Activated CD4-positive, alpha-beta T cell treated with anti-CD3 and anti-CD28 coated beads, Interleukin-2, amount 10 ng/mL, durations not matched to agents 24 days and 14 days (primary cell): ENCODE measurements at regions of chr9 and their contacts with region 1.

Region 1: GRCh38 chr9:89597711-89598625 is 6.8 kb upstream of the GADD45G start:
- DNase-seq: peak; percentile 90
- H3K4me3 Mint-ChIP-seq: no peak overlapping the region
- H3K27ac Mint-ChIP-seq: no peak overlapping the region
- H3K4me1 Mint-ChIP-seq: peaks cover 2% of the 10 kb centered on the region
- H3K27me3 Mint-ChIP-seq: peaks cover 34% of the 10 kb centered on the region

Region 2: DNA sequence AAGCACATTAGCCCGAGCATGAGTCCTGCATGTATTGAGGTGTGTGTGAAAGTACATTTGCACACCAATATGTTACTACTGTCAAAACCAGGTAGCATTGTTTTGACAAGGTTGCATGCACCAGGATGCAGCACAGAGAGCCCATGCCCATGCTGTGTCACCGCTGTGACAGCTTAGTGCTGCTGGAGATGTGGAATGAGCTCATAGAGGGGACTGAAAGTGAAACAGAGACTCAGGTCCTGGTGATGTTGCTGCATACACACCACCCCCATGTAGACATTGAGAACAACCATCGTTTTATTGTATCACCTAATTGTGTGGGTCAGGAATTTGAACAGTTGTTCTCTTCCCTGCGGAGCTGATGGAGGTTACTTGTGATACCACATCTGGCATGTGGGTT is 59.8 kb after region 1 on chr9:
- intact Hi-C with region 1: no loop called
- DNase-seq: peak; percentile 88
- H3K4me3 Mint-ChIP-seq: no peak overlapping the region
- H3K27ac Mint-ChIP-seq: no peak overlapping the region
- H3K4me1 Mint-ChIP-seq: peaks cover 48% of the 10 kb centered on the region
- H3K27me3 Mint-ChIP-seq: peaks cover 14% of the 10 kb centered on the region

Region 3: DNA sequence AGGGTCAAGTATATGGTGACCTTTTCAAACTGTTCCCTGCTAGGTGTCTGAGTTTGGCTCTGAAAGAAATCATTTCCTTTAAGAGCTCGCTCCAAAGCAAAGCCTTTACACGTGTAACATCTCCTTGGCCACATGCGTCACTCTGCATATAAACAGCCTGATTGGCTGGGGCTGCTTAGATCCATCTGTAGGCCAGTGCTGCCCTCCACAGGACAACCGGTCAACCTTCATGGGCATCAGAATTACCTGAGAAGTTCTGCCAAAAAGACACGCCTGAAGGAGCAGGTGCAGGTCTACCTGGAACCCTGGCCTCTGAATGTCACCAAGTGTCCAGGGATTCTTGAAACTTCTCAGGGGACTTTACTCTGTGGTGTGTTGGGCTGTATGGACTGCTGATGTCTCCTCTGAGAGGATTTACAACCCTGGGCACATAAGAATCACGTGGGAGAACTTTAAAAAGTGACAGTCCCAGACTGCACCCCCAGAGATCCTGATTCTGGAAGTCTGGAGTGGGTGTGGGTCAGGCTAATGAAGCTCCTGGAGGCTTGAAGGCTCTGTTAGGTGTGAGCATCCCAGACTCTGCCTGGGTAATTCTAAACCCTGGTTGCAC is 504.4 kb after region 1 on chr9:
- intact Hi-C with region 1: loop called (anchors 1 kb)
- DNase-seq: peak; percentile 94
- H3K4me3 Mint-ChIP-seq: no peak overlapping the region
- H3K27ac Mint-ChIP-seq: peak overlapping the region; percentile 39
- H3K4me1 Mint-ChIP-seq: peaks cover 14% of the 10 kb centered on the region
- H3K27me3 Mint-ChIP-seq: peaks cover 11% of the 10 kb centered on the region

Region 4: GRCh38 chr9:90219548-90220118 is 621.7 kb after region 1 on chr9:
- intact Hi-C with region 1: loop called (anchors 2 kb)
- DNase-seq: peak; percentile 76
- H3K4me3 Mint-ChIP-seq: no peak overlapping the region
- H3K27ac Mint-ChIP-seq: no peak overlapping the region
- H3K4me1 Mint-ChIP-seq: no peaks in the 10 kb centered on the region
- H3K27me3 Mint-ChIP-seq: no peaks in the 10 kb centered on the region